PC-3 (cell line): ENCODE measurements at regions of chr7 and their contacts with region 1.

Region 1: GRCh38 chr7:24381894-24382505 is 98.0 kb downstream of the NPY start:
- DNase-seq: peak; percentile 47
- ATAC-seq: peak; percentile 66
- H3K4me3 ChIP-seq: no peak overlapping the region
- H3K27ac ChIP-seq: no peak overlapping the region
- H3K4me1 ChIP-seq: peaks cover 10% of the 10 kb centered on the region; the same call in 1 of the 2 replicates
- H3K27me3 ChIP-seq: peaks cover 4% of the 10 kb centered on the region; the same call in 1 of the 2 replicates
- CTCF ChIP-seq: peak; percentile 71

Region 2: GRCh38 chr7:23570592-23571200 is 811.3 kb before region 1 on chr7:
- CTCF ChIA-PET with region 1: no interaction called
- POLR2A ChIA-PET with region 1: no interaction called
- intact Hi-C with region 1: loop called (anchors 10 kb)
- DNase-seq: peak; percentile 86
- ATAC-seq: peak; percentile 99
- H3K4me3 ChIP-seq: no peak overlapping the region
- H3K27ac ChIP-seq: no peak overlapping the region
- H3K4me1 ChIP-seq: no peaks in the 10 kb centered on the region
- H3K27me3 ChIP-seq: no peaks in the 10 kb centered on the region
- CTCF ChIP-seq: peak; percentile 93

Region 3: DNA sequence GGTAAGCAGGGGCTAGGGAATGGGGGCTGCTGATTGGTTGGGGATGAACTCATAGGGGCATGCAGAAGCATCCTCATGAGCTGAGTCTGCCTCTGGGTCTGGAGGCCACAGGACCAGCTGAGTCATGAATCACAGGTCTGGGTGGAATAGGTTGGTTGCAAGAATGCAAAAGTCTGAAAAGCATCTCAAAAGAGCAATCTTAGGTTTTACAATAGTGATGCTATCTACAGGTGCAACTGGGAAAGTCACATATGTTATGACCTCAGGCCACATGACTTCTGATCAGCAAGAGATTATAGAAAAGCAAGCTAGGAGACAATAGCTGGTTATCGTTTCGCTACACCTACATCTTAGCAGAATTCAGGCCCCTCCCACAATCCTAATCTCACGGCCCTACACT is 133.9 kb after region 1 on chr7:
- CTCF ChIA-PET with region 1: no interaction called
- POLR2A ChIA-PET with region 1: no interaction called
- intact Hi-C with region 1: no loop called
- DNase-seq: no peak
- ATAC-seq: no peak
- H3K4me3 ChIP-seq: no peak overlapping the region
- H3K27ac ChIP-seq: no peak overlapping the region
- H3K4me1 ChIP-seq: no peaks in the 10 kb centered on the region
- H3K27me3 ChIP-seq: peaks cover 67% of the 10 kb centered on the region
- CTCF ChIP-seq: no peak